GM23248 (cell line): ENCODE measurements at regions of chr10 and their contacts with region 1.

Region 1: GRCh38 chr10:58781873-58782488 is 269.3 kb downstream of the BICC1 start:
- DNase-seq: peak; percentile 73
- H3K4me3 ChIP-seq: no peak overlapping the region
- H3K27ac ChIP-seq: peak overlapping the region; percentile 37
- H3K4me1 ChIP-seq: peaks cover 72% of the 10 kb centered on the region
- H3K27me3 ChIP-seq: no peaks in the 10 kb centered on the region

Region 2: DNA sequence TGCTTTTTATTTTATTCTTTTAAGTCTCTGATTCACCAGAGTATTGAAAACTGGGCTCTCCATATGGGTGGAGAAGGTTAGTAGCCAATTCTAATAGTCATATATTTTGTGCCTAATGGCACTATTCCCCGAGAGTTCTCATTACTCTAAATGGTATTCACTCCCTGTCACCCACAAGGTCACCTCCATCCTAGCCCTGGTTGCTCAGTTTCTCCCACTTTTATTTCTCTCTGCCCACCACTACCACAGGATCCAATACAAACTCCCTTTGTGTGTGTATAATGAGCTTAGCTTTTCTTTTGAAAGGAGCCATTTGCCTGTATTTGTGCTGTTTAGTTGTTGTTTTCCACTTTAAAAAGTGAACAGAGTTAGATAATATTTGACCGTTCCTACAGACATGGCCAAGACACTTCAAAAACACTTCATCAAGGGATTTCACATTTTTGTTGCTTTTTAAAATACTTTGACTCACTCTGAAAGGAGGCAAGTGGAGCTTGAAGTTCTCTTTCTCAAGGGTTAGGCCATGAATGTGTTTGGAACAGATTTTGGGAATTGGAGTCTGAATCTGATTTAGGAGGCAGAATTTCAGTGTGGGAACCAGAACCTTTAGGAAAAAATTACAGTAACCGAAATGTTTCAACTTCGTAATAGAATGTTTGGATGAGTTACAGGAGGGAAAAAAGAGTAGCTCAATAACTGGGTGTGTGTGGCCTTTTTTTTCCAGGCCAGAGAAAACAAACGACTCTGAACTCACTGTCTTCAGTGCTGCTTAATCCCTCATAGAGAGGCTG is 52.0 kb after region 1 on chr10:
- in situ Hi-C with region 1: no loop called
- DNase-seq: peak; percentile 35
- H3K4me3 ChIP-seq: no peak overlapping the region
- H3K27ac ChIP-seq: peak overlapping the region; percentile 38
- H3K4me1 ChIP-seq: peaks cover 16% of the 10 kb centered on the region
- H3K27me3 ChIP-seq: no peaks in the 10 kb centered on the region

Region 3: GRCh38 chr10:58892031-58892531 is 110.1 kb after region 1 on chr10:
- in situ Hi-C with region 1: no loop called
- DNase-seq: peak; percentile 34
- H3K4me3 ChIP-seq: no peak overlapping the region
- H3K27ac ChIP-seq: no peak overlapping the region
- H3K4me1 ChIP-seq: peaks cover 9% of the 10 kb centered on the region
- H3K27me3 ChIP-seq: no peaks in the 10 kb centered on the region

Region 4: DNA sequence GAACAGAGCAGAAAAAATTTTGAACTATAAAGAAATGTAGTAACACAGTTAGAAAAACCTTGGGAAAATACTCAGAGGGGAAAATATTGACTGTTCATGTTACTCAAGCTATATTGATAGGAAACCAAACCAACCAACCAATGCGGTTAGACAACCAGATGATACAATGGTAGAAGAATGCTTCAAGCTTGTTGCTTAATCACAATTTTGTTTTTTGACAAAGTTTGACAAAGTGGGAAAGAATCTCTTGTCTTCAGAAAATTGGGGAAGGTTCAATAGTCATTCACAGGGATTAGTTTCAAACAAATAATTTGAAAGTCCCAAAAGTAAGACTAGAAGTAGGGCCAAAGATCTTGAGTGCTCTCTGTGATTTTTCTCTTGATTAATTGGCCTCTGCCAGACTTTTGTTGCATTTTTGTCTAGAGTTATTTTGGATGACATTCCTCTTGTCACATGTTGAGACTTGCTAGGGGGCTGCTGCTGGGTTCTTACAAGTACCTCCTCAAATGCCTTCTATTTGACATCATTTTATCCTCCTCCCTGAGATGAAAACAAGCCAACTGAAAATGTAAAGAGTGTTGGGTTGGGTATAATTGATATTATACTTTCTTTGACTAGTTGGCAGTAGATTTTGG is 161.4 kb after region 1 on chr10:
- in situ Hi-C with region 1: loop called (anchors 10 kb)
- DNase-seq: peak; percentile 63
- H3K4me3 ChIP-seq: no peak overlapping the region
- H3K27ac ChIP-seq: no peak overlapping the region
- H3K4me1 ChIP-seq: peaks cover 20% of the 10 kb centered on the region
- H3K27me3 ChIP-seq: no peaks in the 10 kb centered on the region

Region 5: GRCh38 chr10:59222788-59223187 is 440.8 kb after region 1 on chr10:
- in situ Hi-C with region 1: loop called (anchors 25 kb)
- DNase-seq: peak; percentile 13
- H3K4me3 ChIP-seq: no peak overlapping the region
- H3K27ac ChIP-seq: no peak overlapping the region
- H3K4me1 ChIP-seq: no peaks in the 10 kb centered on the region
- H3K27me3 ChIP-seq: no peaks in the 10 kb centered on the region

Region 6: GRCh38 chr10:59580026-59580863 is 798.3 kb after region 1 on chr10:
- in situ Hi-C with region 1: loop called (anchors 25 kb)
- DNase-seq: peak; percentile 58
- H3K4me3 ChIP-seq: no peak overlapping the region
- H3K27ac ChIP-seq: no peak overlapping the region
- H3K4me1 ChIP-seq: no peaks in the 10 kb centered on the region
- H3K27me3 ChIP-seq: no peaks in the 10 kb centered on the region